Activated naive CD4-positive, alpha-beta T cell treated with anti-CD3 and anti-CD28 coated beads for 36 hours (primary cell): ENCODE measurements at regions of chr2 and their contacts with region 1.

Region 1: DNA sequence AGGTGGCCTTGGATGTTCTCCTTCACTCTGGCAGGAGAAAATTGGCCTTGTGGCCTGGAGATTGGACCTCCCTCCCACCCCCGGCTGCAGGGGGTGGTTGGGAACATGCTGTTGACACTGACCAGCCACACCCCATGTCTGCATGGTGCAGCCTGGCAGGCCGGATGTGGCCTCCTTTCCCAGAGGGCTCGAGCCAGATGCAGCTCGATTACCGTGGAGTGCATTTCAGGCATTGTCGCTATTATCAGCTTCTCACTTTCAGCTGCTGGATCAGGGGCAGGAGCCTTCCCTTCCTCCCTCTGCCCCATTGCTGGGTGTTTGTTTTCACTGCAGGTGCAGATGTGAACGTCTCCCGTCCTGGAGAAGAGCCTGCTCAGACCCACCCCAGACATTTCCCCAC is 211.0 kb upstream of the SIX2 start:
- DNase-seq: no peak
- H3K4me3 Mint-ChIP-seq: no peak overlapping the region
- H3K27ac Mint-ChIP-seq: no peak overlapping the region
- H3K4me1 Mint-ChIP-seq: no peaks in the 10 kb centered on the region
- H3K27me3 Mint-ChIP-seq: peaks cover 28% of the 10 kb centered on the region

Region 2: DNA sequence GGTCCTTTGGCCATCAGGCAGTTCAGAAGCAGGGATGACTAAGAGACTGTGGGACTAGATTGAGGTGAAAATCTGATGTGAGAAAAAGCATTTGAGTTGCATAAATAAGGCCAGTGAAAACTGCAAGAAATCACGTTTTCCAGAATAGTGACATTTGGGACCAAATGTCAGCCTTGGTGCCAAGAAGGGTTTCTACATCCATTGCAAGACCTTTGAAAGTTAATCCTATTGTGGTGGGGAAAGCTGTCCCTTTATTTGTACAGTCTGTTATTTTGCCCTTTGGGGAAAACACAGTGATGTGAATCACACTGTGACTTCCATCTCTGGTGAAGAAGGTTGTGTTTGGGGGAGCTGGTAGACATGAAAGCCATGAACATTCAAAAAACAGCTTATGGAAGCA is 57.5 kb before region 1 on chr2:
- CTCF ChIA-PET with region 1: no interaction called
- intact Hi-C with region 1: loop called (anchors 5 kb)
- DNase-seq: no peak
- H3K4me3 Mint-ChIP-seq: no peak overlapping the region
- H3K27ac Mint-ChIP-seq: no peak overlapping the region
- H3K4me1 Mint-ChIP-seq: no peaks in the 10 kb centered on the region
- H3K27me3 Mint-ChIP-seq: peaks cover 44% of the 10 kb centered on the region